AG04450 (cell line): ENCODE measurements at regions of chr6 and their contacts with region 1.

Region 1: DNA sequence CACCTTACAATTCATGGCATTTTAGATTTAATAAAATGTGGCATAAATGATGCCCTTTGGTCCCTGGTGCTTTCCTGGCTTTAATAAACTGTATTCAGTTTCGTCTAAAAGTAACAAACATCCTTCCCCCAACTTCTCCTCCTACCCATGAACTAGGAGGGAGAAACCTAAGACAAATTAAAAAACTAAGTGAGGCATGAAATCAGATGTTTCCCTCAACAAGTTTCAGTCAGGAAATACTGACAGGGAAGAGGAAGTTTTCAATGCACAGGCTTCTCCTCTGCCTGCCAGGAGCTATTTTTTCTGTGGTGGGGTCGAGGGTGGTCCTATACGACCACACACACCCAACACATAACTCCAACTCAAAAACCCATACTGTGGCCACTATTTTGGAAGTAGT is 10.0 kb downstream of the HBS1L start:
- DNase-seq: no peak
- H3K4me3 ChIP-seq: no peak overlapping the region
- H3K27ac ChIP-seq: no peak overlapping the region
- H3K27me3 ChIP-seq: no peaks in the 10 kb centered on the region
- CTCF ChIP-seq: no peak

Region 2: DNA sequence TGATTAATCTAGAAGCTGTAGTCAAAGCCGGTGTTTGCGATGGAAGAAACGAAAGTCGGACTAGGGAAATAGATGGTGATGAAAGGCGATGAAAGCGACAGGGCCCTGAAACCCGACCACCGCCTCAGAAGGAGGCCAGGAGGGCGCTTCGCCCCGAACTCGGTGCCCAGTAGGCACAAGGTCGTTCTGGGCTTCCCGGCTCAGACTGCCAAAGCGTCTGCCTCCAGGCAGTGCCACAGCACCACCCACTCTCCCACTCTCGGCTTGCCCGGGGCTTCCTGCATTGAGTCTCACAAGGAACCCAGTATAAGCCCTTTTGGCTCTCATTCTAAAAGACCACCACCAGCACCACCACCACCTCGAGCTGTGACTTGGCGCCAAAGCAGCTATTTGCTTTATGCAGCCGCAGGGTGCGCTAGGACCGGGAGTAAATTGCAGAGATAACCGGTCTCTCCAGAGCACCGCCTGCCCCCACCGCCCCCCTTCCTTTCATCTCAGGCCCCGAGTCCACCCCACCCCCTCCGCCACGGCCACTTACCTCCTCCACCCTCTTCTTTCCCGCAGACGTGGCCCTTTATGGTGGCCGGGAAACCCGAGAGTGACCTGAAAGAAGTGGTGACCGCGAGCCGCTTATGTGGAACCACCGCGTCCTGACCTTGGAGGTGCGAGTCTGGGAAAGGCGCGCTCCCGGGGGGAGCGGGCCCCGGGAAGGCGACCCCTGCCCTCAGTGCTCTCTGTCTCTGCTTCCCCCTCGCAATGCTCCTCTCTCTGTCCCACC is 1153.3 kb before region 1 on chr6:
- CTCF ChIA-PET with region 1: no interaction called
- POLR2A ChIA-PET with region 1: no interaction called
- DNase-seq: no peak
- H3K4me3 ChIP-seq: peak overlapping the region; percentile 98
- H3K27ac ChIP-seq: peak overlapping the region; percentile 75
- H3K27me3 ChIP-seq: no peaks in the 10 kb centered on the region
- CTCF ChIP-seq: 0 out of 2 replicates have a peak, but pooled peaks have one; percentile 9

Region 3: GRCh38 chr6:135054569-135055498 is 10.2 kb after region 1 on chr6 and contains the start of gene HBS1L:
- CTCF ChIA-PET with region 1: interaction called, 4 read pairs
- POLR2A ChIA-PET with region 1: interaction called, 14 read pairs
- DNase-seq: peak; percentile 95
- H3K4me3 ChIP-seq: peak within 1 kb of the TSS; percentile 94
- H3K27ac ChIP-seq: peak within 1 kb of the TSS; percentile 69
- H3K27me3 ChIP-seq: no peaks in the 10 kb centered on the region
- CTCF ChIP-seq: no peak
- polyA plus RNA-seq, gene HBS1L: 74.2 and 101 TPM in 2 replicates

Region 4: GRCh38 chr6:135066397-135066796 is 21.8 kb after region 1 on chr6:
- CTCF ChIA-PET with region 1: no interaction called
- POLR2A ChIA-PET with region 1: no interaction called
- DNase-seq: no peak
- H3K4me3 ChIP-seq: no peak overlapping the region
- H3K27ac ChIP-seq: no peak overlapping the region
- H3K27me3 ChIP-seq: peaks cover 3% of the 10 kb centered on the region
- CTCF ChIP-seq: no peak

Region 5: DNA sequence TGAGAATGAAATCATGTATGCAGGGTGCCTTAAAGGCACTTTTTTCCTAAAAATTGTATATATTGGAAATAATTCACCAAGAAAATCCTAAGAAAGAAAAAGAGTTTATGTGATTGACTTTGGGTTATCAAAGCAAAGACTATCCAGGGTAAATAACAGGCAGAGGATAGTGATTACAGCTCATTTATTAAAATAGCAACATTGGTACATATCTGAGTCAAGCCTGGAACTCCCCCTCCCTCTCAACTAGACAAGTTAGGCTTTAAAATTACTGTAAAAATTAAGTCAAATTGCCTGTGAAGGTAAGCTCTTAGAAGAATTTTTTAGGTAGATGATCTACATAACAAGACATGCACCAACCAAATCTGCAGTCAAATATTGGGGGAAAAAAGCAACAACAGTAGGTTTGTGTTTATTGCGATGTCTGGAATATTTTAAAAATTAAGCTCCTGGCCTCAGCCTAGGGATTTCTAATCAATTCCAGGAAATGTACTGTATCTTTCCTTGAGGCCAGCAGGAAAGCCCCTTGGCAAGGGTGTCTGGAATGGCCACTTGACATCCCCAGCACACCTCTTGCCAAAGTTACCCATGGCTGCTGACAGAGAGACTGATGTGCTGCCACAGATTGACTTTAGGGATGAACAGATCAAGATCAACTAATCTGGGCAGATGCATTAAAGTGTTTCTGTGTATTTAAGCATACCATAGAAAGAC is 41.2 kb after region 1 on chr6:
- CTCF ChIA-PET with region 1: no interaction called
- POLR2A ChIA-PET with region 1: interaction called, 10 read pairs
- DNase-seq: no peak
- H3K4me3 ChIP-seq: peak overlapping the region; percentile 17; the same call in 1 of the 2 replicates
- H3K27ac ChIP-seq: no peak overlapping the region
- H3K27me3 ChIP-seq: peaks cover 7% of the 10 kb centered on the region
- CTCF ChIP-seq: no peak